MCF 10A (cell line): ENCODE measurements at regions of chr1 and their contacts with region 1.

Region 1: GRCh38 chr1:176559878-176560277 is 96.9 kb downstream of the PAPPA2 start:
- DNase-seq: peak; percentile 83
- H3K4me3 Mint-ChIP-seq: no peak overlapping the region
- H3K27ac Mint-ChIP-seq: no peak overlapping the region
- H3K4me1 Mint-ChIP-seq: no peaks in the 10 kb centered on the region
- H3K27me3 Mint-ChIP-seq: peaks cover 31% of the 10 kb centered on the region
- CTCF ChIP-seq: peak; percentile 99

Region 2: DNA sequence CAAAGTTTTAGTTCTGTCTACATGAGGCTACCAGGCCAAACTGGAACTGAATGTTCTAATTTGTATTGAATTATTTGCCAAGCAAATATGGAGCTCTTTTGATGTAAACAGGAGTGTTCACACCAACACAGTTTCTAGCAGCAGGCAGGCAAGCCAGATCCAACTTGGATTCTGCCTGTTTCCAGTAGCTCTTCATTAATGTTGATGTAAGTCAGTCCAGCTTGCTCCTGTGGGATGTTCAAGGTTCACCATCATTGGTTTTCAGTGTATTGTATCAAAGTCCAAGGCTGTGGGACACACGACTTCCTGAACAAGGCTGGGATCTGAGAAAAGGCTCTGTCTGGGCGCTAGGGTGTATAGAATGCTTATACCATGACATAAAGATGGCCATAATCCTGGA is 28.8 kb before region 1 on chr1:
- CTCF ChIA-PET with region 1: interaction called, 39 read pairs
- POLR2A ChIA-PET with region 1: no interaction called
- intact Hi-C with region 1: no loop called
- DNase-seq: no peak
- H3K4me3 Mint-ChIP-seq: no peak overlapping the region
- H3K27ac Mint-ChIP-seq: no peak overlapping the region
- H3K4me1 Mint-ChIP-seq: peaks cover 7% of the 10 kb centered on the region
- H3K27me3 Mint-ChIP-seq: peaks cover 37% of the 10 kb centered on the region
- CTCF ChIP-seq: no peak

Region 3: GRCh38 chr1:176595217-176595616 is 35.3 kb after region 1 on chr1:
- CTCF ChIA-PET with region 1: interaction called, 10 read pairs
- POLR2A ChIA-PET with region 1: no interaction called
- intact Hi-C with region 1: no loop called
- DNase-seq: no peak
- H3K4me3 Mint-ChIP-seq: no peak overlapping the region
- H3K27ac Mint-ChIP-seq: no peak overlapping the region
- H3K4me1 Mint-ChIP-seq: no peaks in the 10 kb centered on the region
- H3K27me3 Mint-ChIP-seq: no peaks in the 10 kb centered on the region
- CTCF ChIP-seq: no peak

Region 4: DNA sequence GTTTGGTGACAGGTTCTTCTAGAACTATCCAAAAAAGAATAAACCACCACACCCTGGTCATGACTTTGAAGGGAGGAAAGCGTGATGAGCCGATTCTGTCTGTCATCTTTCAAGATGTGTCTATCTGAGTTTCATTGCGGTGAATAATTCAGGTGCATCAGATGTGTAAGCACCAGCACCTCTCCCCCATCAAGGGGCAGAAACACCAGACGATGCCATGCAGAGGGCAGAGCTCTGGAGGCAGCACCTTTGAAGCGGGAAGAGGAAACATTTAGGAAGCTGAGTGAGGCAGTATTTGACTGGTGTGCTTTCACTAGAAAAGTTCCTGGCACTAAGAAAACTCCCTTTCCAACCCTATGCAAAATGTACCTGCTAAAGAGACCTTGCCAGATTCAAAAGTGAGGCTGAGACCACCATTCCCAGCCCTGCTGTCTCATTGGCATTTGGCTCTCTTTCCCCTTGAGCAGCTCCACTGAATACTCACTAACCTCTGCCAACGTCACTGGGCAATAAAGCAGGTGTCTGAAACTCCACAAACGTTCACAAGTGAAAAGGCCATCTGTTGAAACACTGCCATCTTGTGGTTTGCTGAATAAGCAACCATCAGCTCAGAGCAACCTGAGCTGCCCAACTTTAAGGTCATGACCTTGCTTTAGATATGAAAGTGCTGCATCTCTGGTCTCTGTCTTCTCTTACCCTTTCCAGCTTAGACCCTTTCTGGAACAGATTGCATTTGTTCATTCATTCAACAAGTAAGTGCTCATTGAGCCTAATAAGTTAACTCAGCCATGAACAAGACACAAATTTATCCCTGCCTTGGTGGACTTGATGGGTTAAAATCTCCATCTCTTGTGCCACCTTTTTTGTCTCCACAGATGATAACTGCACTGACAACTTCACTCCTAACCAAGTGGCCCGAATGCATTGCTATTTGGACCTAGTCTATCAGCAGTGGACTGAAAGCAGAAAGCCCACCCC is 131.7 kb after region 1 on chr1:
- CTCF ChIA-PET with region 1: interaction called, 252 read pairs
- POLR2A ChIA-PET with region 1: interaction called, 3 read pairs
- intact Hi-C with region 1: loop called (anchors 1 kb)
- DNase-seq: peak; percentile 81
- H3K4me3 Mint-ChIP-seq: no peak overlapping the region
- H3K27ac Mint-ChIP-seq: no peak overlapping the region
- H3K4me1 Mint-ChIP-seq: peaks cover 7% of the 10 kb centered on the region
- H3K27me3 Mint-ChIP-seq: no peaks in the 10 kb centered on the region
- CTCF ChIP-seq: peak; percentile 89

Region 5: GRCh38 chr1:176745945-176746344 is 186.1 kb after region 1 on chr1:
- CTCF ChIA-PET with region 1: interaction called, 12 read pairs
- POLR2A ChIA-PET with region 1: no interaction called
- intact Hi-C with region 1: no loop called
- DNase-seq: peak; percentile 36
- H3K4me3 Mint-ChIP-seq: no peak overlapping the region
- H3K27ac Mint-ChIP-seq: no peak overlapping the region
- H3K4me1 Mint-ChIP-seq: no peaks in the 10 kb centered on the region
- H3K27me3 Mint-ChIP-seq: no peaks in the 10 kb centered on the region
- CTCF ChIP-seq: peak; percentile 26

Region 6: GRCh38 chr1:176843352-176844297 is 283.7 kb after region 1 on chr1:
- CTCF ChIA-PET with region 1: interaction called, 140 read pairs
- POLR2A ChIA-PET with region 1: no interaction called
- intact Hi-C with region 1: loop called (anchors 1 kb)
- DNase-seq: peak; percentile 53
- H3K4me3 Mint-ChIP-seq: no peak overlapping the region
- H3K27ac Mint-ChIP-seq: no peak overlapping the region
- H3K4me1 Mint-ChIP-seq: no peaks in the 10 kb centered on the region
- H3K27me3 Mint-ChIP-seq: no peaks in the 10 kb centered on the region
- CTCF ChIP-seq: peak; percentile 84

Region 7: DNA sequence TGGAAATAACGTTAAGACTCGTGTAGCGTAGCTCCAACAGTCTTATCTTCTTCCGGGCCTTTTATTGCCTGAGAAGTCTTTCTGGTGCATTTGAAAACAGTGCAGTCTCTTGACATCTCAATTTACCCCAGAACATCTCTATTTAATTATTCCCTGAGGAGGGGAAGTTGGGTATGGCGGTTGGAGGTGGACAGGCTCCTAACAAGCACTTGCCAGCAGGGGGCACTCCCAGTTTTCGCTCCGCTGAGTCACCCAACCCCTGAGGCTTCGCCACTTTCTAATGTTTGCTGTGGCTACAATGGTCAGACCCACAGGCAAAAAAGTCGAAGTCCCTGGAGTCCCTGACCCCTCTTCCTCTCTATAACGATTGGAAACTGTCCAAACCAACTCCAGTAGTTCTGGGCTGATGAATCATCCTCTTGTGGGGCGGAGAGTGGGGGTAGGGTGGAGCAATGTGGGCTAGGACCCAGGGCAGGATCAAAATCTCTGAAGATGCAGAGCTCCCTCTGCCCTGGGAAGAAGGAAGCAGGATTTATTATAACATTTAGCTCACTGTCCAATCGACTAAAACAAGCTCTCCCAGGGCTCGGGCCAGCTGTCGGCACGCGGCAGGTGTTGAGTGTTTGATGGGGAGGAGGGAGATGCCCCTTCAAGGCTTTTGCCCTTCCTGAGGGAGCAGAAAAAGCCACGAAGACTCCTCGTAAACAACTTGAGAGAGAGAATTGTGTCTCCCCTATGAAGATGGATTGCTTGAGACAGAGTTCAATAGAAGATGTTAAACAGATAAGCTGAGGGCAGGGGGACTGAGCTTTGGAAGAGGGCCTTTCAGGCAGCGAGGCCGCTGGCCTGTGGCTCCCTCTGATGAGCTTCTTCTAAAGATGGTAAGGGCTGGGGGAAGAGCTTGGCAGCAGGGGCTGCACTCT is 696.5 kb after region 1 on chr1:
- CTCF ChIA-PET with region 1: no interaction called
- POLR2A ChIA-PET with region 1: no interaction called
- intact Hi-C with region 1: no loop called
- DNase-seq: peak; percentile 96
- H3K4me3 Mint-ChIP-seq: no peak overlapping the region
- H3K27ac Mint-ChIP-seq: no peak overlapping the region
- H3K4me1 Mint-ChIP-seq: peaks cover 21% of the 10 kb centered on the region
- H3K27me3 Mint-ChIP-seq: no peaks in the 10 kb centered on the region
- CTCF ChIP-seq: peak; percentile 70